GM10248 (cell line): ENCODE measurements at regions of chr11 and their contacts with region 1.

Region 1: DNA sequence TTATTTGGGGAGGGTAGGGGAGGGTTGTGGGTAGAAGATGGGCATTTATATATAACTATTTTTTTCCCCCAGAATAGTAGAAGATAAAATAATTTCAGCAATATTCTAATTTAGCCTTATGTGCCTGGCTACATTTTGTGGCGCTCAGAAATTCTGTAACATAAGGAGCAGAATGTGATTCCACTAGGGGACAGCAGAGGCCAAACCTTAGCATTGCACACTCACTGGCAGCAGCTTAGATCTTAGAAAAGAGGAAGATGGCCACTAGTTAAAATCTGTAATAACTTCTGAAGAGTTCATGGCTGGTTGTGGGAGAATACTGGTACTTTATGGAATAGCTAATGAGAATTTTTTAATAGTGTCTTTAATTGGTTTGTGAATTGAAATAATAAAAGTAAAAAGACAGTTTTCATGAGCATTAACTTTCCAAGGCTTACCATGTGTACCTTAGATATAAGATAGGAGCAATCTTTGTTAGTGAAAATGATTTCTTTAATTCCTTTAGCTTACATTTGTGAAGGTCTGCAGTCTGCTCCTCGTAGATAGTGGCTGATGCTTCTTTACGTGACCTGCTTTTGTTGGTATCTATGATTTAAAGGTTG is 33.1 kb downstream of the DDX10 start:
- DNase-seq: peak; percentile 71
- CTCF ChIP-seq: peak; percentile 82

Region 2: DNA sequence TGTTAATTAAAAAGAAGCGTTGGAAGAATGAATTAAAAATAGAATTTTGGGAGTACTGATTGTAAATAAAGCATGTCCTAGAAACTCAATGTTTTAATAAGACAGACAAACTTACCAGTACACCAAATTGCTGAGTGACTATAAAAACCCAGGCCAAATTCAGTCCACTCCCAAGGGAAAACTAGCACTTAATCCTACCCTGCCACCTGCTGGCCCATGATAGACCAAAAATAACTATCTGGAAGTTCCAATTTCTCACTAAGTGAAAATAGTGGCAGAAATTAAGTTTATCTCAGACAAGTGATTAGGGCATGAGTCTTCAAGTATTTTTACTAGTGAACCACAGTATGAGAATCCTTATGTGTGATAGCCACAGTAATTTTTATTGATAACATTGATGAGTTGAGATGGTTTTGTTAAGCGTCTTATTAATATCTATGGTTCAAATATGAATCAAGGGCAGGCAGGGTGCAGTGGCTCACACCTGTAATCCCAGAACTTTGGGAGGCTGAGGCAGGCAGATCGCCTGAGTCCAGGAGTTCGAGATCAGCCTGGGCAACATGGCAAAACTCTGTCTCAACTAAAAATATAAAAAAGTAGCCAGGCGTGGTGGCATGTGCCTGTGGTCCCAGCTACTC is 42.9 kb before region 1 on chr11:
- CTCF ChIA-PET with region 1: no interaction called
- POLR2A ChIA-PET with region 1: no interaction called
- DNase-seq: peak; percentile 26
- CTCF ChIP-seq: peak; percentile 66

Region 3: GRCh38 chr11:108708173-108708572 is 10.2 kb after region 1 on chr11:
- CTCF ChIA-PET with region 1: interaction called, 16 read pairs
- POLR2A ChIA-PET with region 1: no interaction called
- DNase-seq: no peak
- CTCF ChIP-seq: no peak

Region 4: DNA sequence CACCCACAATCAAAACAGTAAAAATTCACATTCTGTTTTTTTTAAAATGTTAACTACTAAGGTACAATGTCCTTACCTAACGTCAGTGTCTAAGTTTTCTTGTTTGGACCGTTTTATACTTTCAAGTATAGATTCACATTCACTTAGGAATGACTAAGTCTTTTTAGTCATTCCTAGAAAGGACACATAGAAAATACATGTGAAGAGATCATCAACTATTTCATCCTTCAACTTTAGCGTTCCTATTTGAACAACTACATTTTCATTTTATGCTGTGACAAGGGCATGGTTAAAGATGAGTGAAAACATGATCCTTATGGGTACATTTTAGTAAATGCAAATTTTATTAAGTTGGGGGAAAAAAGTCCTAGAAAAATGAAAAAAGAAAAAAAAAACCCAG is 29.7 kb after region 1 on chr11:
- CTCF ChIA-PET with region 1: interaction called, 39 read pairs
- POLR2A ChIA-PET with region 1: no interaction called
- DNase-seq: no peak
- CTCF ChIP-seq: no peak

Region 5: DNA sequence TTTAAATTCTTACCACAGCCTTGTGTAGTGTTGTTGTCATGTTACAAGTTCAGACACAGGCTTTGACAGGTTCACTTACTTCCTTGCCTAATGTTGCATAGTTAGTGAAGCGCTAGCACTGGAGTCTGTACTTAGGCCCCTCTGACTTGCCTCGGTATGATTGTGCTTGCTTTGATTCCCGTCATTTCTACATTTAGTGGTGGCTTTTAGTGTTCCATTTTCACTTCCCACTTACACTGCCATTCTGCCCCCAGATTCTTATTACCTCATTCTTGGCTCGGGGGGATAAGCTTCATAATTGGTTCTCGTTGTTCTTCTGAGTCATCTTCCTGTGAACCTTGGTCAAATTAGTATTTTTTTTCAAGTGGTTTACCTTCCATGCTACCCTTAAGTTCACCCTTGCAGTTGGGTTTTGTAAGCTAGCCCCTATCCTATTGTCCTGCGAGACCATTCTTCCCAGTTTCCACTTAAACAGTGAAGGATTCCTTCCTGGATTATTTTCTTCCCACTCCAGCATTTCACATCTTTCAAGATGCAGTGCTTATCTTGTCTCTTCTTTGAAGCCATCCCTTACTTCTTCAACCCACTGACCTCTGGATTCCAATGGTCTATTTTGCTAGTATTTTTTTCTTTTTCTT is 35.6 kb after region 1 on chr11:
- CTCF ChIA-PET with region 1: interaction called, 39 read pairs
- POLR2A ChIA-PET with region 1: no interaction called
- DNase-seq: peak; percentile 40
- CTCF ChIP-seq: peak; percentile 1

Region 6: GRCh38 chr11:108853864-108854263 is 155.9 kb after region 1 on chr11:
- CTCF ChIA-PET with region 1: interaction called, 11 read pairs
- POLR2A ChIA-PET with region 1: no interaction called
- DNase-seq: no peak
- CTCF ChIP-seq: no peak

Region 7: DNA sequence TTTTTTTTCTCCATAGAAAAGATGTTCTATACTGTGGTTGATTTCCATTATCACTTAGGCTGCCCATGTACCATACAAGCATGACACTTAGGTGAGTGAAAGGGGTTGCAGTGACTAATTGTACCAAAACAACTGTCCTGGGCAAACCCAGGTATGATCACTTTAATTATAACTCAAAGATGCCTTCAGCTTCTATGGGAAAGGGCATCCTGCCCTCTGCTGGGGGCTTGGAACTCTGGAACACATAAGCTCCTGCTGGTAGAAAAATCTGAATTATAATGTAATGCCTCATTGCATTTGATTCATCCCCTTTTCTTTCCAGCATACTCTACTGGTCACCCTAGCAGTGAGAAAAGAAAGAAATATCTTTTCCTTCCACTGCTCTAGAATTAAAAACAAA is 173.2 kb after region 1 on chr11:
- CTCF ChIA-PET with region 1: interaction called, 46 read pairs
- POLR2A ChIA-PET with region 1: no interaction called
- DNase-seq: peak; percentile 13
- CTCF ChIP-seq: peak; percentile 63

Region 8: GRCh38 chr11:108916935-108917334 is 219.0 kb after region 1 on chr11:
- CTCF ChIA-PET with region 1: no interaction called
- POLR2A ChIA-PET with region 1: no interaction called
- DNase-seq: no peak
- CTCF ChIP-seq: no peak

Region 9: DNA sequence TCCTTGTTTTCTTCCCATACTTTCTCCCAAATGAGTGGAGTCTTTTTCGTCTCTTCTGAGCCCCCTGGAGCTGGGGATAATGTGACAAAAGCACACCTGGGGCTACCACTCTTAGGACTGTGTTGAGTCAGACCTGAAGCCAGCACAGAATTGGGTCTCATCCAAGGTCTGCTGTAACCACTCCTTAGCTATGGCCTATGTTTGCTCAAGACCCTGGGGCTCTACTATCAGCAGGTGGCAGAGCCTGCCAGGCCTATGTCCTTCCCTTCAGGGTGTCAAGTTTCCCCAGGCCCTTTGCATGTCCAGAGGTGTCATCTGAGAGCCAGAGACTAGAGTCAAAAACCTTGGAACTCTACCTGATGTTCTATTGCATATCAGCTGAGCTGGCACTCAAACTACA is 302.6 kb after region 1 on chr11:
- CTCF ChIA-PET with region 1: no interaction called
- POLR2A ChIA-PET with region 1: no interaction called
- DNase-seq: no peak
- CTCF ChIP-seq: no peak

Region 10: DNA sequence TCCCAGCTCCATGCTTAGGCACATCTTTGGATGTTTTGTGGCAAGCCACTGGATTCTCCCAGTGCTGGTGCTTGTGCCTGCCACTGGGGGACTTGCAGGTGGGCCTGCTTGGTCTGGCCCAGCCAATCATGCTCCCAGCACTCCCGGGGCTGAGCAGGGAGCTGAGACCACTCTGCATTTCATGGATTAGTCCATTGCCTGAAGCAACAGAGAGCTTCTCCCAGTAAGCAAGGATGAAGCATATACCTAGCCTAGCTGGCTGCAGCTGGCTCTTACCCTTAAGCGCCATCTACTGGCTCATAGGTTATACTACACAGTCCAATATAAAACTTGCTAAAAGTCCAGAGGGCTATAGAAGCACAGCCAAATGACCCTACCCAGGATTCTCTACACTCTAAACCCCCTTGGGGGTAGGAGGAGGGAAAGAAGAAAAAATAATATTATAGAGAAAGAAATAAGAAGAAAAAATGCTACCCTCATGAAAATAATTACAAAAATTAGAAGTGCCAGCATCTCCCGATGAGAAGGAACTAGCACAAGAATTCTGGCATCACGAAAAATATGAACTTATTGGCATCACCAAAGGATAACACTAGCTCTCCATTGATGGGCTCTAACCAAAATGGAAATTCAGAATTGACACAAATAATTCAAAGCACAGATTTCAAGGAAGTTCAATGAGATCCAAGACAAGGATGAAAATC is 999.3 kb after region 1 on chr11:
- CTCF ChIA-PET with region 1: interaction called, 18 read pairs
- POLR2A ChIA-PET with region 1: no interaction called
- DNase-seq: peak; percentile 23
- CTCF ChIP-seq: peak; percentile 49